Tibial artery (tissue), 4 donors: ENCODE measurements at regions of chr1 and their contacts with region 1.

Region 1: DNA sequence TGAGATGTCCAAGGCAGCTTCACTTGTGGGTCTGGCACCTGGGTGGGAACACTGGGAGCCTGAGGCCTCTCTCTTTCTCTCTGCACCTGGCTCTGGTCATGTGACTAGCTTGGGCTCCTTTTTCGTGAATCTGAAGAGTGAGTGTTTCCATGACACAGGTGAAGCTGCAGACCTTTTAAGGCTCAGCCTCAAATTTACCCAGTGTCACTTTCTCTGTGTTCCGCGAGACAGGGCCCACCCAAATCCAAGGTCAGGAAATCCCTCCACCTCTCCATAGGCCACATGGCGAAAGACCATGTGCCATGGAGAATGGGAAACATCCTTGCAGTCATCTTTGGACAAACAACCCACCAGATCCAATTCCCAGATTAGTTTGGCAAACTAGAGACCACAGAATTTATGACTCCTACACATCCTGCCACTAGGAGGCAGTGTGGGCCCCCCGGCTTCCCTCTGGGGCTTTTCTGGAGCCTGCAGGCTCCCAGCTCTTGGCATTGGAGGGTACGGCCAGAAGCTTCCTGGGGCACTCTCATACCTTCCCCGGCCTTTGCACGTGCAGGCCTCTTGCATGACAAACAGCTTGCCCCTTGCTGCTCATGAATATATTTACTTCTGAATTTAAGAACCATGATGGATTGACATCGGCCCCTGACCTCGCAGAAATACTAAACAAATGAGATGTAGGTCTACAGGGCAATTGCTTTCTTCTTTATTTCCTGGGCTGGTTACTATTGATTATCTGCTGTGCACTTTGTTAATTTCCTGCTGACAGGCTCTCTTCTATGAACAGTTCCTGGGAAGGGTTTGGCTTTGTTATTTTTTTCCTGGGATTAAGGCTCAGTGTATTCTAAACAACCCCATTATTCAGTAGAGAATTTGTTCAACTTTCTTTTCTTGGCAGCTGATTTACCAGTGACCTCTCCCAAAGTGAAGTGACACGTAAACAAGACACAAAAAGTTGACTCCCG is 180.7 kb downstream of the KAZN start:
- DNase-seq: no peak
- H3K4me3 ChIP-seq: no peak overlapping the region
- H3K27ac ChIP-seq: no peak overlapping the region
- H3K4me1 ChIP-seq: no peaks in the 10 kb centered on the region
- H3K27me3 ChIP-seq: no peaks in the 10 kb centered on the region
- CTCF ChIP-seq: peak; percentile 45 to 66

Region 2: DNA sequence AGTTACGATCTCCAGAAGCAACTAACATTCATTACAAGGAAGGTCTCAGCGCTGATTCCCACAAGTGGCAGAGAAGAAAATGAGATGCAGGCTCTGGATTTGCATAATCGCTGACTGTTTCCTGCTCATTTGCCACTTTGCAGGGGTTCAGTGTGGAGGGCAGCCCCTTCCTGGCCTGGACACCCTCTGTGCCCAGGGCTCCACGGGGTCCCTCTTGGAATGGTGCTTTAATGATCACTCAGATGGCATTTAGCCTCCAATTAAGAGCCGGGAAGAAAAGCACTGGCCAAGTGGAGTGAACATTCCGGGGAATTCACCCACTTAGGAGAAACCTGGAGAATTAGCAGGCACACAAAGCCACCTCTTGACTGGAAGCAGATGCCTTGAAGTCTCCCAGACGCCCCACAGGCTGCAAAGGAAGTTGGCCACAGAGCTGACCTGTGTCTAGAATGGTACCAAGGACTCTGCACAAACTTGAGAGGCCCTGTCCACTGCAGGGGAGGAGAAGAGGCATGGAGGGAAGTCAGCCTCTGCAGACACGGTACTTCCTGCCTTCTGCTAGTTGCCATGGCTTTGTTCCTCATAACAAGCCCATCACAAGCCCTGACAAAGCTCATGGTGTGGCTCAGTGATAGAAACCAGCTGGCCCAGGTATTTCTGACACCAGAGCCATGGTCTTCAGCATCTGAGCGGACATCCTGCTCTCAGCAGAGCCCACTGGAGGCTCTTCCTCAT is 23.5 kb before region 1 on chr1:
- intact Hi-C with region 1: no loop called
- DNase-seq: no peak
- H3K4me3 ChIP-seq: no peak overlapping the region
- H3K27ac ChIP-seq: no peak overlapping the region
- H3K4me1 ChIP-seq: peaks cover 0 to 3% (median 0%) of the 10 kb centered on the region in 4 donors
- H3K27me3 ChIP-seq: peaks cover 0 to 23% of the 10 kb centered on the region in 2 donors
- CTCF ChIP-seq: no peak

Region 3: GRCh38 chr1:15028102-15028501 is 248.9 kb after region 1 on chr1:
- intact Hi-C with region 1: loop called (anchors 5 kb)
- DNase-seq: peak; percentile 53 to 86
- H3K4me3 ChIP-seq: no peak overlapping the region
- H3K27ac ChIP-seq: peak overlapping the region; percentile 22 to 31
- H3K4me1 ChIP-seq: peaks cover 0 to 22% (median 7%) of the 10 kb centered on the region in 4 donors
- H3K27me3 ChIP-seq: no peaks in the 10 kb centered on the region
- CTCF ChIP-seq: no peak

Region 4: DNA sequence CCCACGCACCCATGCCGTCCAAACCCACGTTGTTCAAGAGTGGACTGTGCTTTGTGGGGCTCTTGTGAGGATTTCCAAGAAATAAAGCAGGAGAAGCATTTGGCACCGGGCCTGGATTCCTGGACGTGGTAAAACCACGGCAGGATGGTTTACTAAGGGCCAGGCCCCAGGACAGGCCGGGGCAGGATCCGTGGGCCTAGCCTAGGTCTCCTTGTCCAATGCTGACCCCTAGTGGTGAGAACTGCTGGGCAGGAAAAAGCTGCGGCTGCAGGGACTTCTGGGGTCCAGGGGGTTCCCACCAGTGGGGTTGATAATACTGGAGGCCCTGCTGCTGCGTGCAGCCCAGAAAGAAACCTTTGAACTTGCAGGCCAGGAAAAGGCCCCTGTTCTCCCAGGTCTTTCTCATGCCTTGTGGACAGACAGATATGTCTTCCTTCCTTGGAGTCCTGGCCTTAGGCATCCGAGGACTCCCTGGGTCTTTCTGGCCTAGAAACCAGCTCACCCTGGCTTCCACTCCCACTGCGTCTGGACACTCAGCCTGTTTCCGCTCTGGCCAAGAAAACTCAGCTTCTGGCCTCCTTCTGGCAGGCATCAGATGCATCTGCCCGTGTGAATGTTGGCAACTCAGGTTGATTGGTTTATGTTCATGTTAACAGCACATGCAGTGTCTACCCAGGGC is 267.4 kb after region 1 on chr1:
- intact Hi-C with region 1: loop called (anchors 2 kb)
- DNase-seq: peak; percentile 53 to 76
- H3K4me3 ChIP-seq: no peak overlapping the region
- H3K27ac ChIP-seq: no peak overlapping the region
- H3K4me1 ChIP-seq: peaks cover 0 to 4% (median 1%) of the 10 kb centered on the region in 4 donors
- H3K27me3 ChIP-seq: no peaks in the 10 kb centered on the region
- CTCF ChIP-seq: peak; percentile 89 to 91

Region 5: DNA sequence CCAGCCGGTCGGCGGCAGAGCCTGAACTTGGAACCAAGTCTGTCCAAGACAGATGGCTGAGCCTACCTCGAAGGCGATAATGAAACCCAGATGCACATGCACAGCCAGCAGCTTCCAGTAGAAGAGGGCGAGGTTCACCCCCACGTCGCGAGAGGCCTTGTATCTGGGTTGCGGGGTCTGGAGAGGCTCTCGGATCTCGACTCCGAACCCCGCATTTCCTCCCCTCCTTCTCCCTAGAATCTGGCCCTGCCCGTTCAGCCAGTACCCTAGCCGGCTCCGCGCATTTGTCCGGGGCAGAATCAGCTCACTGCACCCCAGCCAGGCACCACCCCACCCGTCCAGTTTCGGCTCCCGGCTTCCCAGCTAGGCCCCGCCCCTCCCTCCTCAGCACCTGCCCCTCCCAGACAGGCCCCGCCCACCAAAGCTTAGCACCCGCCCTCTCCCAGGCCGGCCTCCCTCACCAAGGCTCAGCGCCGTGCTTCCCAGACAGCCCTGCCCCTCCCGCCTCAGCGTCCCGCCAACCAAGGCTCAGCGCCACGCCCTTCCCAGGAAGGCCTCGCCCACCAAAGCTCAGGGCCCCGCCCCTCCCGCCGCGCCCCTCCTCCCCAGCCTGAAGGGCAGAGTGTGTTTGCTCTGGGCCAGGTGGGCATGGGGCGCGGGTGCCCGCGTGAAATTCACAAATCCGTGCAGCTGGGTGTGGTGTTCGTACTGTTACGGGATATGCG is 1438.0 kb after region 1 on chr1:
- intact Hi-C with region 1: no loop called
- DNase-seq: peak; percentile 99
- H3K4me3 ChIP-seq: peak overlapping the region; percentile 51 to 54
- H3K27ac ChIP-seq: peak overlapping the region; percentile 51 to 54
- H3K4me1 ChIP-seq: peaks cover 0 to 18% (median 13%) of the 10 kb centered on the region in 4 donors
- H3K27me3 ChIP-seq: no peaks in the 10 kb centered on the region
- CTCF ChIP-seq: no peak